Dendritic cell treated with granulocyte-macrophage colony-stimulating factor and Interleukin-4, amounts not matched to agents 40 ng/mL and 50 ng/mL, for 4 days (primary cell): ENCODE measurements at regions of chr4 and their contacts with region 1.

Region 1: GRCh38 chr4:87465739-87466366 is 43.5 kb downstream of the NUDT9 start:
- H3K4me3 Mint-ChIP-seq: no peak overlapping the region
- H3K27ac Mint-ChIP-seq: no peak overlapping the region
- H3K4me1 Mint-ChIP-seq: no peaks in the 10 kb centered on the region
- H3K27me3 Mint-ChIP-seq: no peaks in the 10 kb centered on the region

Region 2: DNA sequence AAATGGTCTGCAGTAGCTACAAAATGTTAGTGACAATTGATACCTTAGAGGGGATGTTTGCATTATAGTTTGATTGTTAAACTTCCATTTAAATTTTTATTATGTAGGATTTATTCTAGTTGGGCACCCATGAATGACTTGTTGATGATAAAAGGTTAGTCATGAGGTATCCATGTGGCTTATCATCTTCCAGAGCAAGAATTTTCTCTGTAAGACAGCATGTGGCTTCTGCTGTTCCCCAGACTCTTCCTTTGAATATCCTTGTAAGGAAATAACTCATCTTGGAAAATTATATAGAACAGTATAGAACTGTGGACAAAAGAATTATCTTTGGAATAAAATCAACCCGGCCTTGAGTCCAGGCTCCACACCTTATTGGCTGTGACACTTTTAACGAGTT is 205.4 kb before region 1 on chr4:
- intact Hi-C with region 1: loop called (anchors 10 kb)
- H3K4me3 Mint-ChIP-seq: no peak overlapping the region
- H3K27ac Mint-ChIP-seq: no peak overlapping the region
- H3K4me1 Mint-ChIP-seq: peaks cover 7% of the 10 kb centered on the region
- H3K27me3 Mint-ChIP-seq: no peaks in the 10 kb centered on the region

Region 3: DNA sequence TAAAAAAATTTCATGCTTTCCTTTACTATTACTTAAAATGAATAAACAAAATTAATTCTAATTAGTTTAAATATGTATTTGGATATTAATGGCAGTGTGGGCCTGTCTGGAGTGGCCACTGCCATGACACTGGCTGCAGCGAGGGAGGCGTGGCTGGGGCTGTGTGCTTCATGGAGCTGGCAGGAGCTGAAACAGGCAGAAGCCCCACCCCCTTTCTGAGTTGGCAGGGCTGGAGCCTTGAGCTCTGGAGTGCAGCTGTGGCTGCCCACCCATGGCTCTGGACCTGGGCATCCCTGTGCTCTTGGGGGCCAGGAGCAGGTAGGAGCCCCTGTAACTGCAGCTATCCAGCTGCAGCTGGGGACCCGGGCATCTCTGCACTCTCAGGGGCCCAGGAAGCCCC is 66.7 kb before region 1 on chr4:
- intact Hi-C with region 1: no loop called
- H3K4me3 Mint-ChIP-seq: no peak overlapping the region
- H3K27ac Mint-ChIP-seq: no peak overlapping the region
- H3K4me1 Mint-ChIP-seq: no peaks in the 10 kb centered on the region
- H3K27me3 Mint-ChIP-seq: no peaks in the 10 kb centered on the region